Gastrocnemius medialis (tissue), 4 donors: ENCODE measurements at regions of chr9 and their contacts with region 1.

Region 1: GRCh38 chr9:9790216-9790872 is 822.5 kb downstream of the PTPRD start:
- DNase-seq: no peak
- ATAC-seq: no peak
- H3K4me3 ChIP-seq: no peak overlapping the region
- H3K27ac ChIP-seq: no peak overlapping the region
- H3K4me1 ChIP-seq: no peaks in the 10 kb centered on the region
- H3K27me3 ChIP-seq: no peaks in the 10 kb centered on the region
- CTCF ChIP-seq: peak in 2 of 5 experiments; percentile 18 to 31
- POLR2A ChIP-seq: no peak

Region 2: DNA sequence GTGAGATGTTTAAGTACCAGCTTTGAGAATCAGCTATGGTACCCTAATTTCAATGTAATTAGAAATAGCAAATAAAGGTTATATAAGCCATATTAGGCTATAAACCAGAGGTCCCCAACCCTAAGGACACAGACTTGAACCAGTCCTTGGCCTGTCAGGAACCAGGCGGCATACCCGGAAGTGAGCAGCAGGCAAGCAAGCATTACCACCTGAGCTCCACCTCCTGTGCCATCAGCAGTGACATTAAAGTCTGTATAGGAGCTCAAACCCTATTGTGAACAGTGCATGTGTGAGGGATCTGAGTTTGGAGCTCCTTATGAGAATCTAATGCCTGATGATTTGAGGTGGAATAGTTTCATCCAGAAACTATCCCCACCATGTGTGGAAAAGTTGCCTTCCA is 187.0 kb before region 1 on chr9:
- in situ Hi-C with region 1: loop called in 1 of 4 experiments (anchors 10 kb)
- intact Hi-C with region 1: no loop called
- DNase-seq: no peak
- ATAC-seq: no peak
- H3K4me3 ChIP-seq: no peak overlapping the region
- H3K27ac ChIP-seq: no peak overlapping the region
- H3K4me1 ChIP-seq: no peaks in the 10 kb centered on the region
- H3K27me3 ChIP-seq: no peaks in the 10 kb centered on the region
- CTCF ChIP-seq: no peak
- POLR2A ChIP-seq: no peak